WTC11 (cell line): ENCODE measurements at regions of chr22 and their contacts with region 1.

Region 1: GRCh38 chr22:36301384-36301828 is 48.5 kb downstream of the APOL1 start:
- DNase-seq: peak; percentile 89
- ATAC-seq: peak; percentile 98
- H3K4me3 Mint-ChIP-seq: no peak overlapping the region
- H3K27ac Mint-ChIP-seq: peak overlapping the region; percentile 72
- H3K4me1 Mint-ChIP-seq: no peaks in the 10 kb centered on the region
- H3K27me3 Mint-ChIP-seq: no peaks in the 10 kb centered on the region
- CTCF ChIP-seq: peak; percentile 97

Region 2: DNA sequence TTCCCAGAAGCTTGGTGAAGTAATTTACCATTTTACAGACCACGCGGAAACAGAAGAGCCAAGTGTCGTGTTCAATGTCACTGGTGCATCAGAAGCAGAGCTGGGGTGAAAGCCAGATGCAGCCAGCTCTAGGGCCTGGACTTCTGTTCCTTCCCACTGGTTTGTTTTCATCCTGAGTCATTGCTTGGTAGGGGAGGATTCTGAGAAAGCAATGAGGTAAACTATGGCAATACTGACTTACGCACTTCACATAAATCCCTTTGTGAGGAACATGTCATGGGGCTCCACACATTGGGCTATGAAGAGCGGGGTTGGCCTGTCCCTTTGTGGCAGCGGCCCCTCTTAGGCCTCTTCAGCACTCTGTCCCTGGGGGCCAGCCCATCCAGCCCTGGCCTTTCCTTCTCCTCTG is 220.4 kb before region 1 on chr22:
- CTCF ChIA-PET with region 1: no interaction called
- POLR2A ChIA-PET with region 1: no interaction called
- DNase-seq: no peak
- ATAC-seq: no peak
- H3K4me3 Mint-ChIP-seq: no peak overlapping the region
- H3K27ac Mint-ChIP-seq: no peak overlapping the region
- H3K4me1 Mint-ChIP-seq: peaks cover 10% of the 10 kb centered on the region
- H3K27me3 Mint-ChIP-seq: no peaks in the 10 kb centered on the region
- CTCF ChIP-seq: no peak

Region 3: GRCh38 chr22:36286471-36287224 is 14.8 kb before region 1 on chr22:
- CTCF ChIA-PET with region 1: interaction called, 27 read pairs
- POLR2A ChIA-PET with region 1: no interaction called
- DNase-seq: peak; percentile 87
- ATAC-seq: peak; percentile 94
- H3K4me3 Mint-ChIP-seq: no peak overlapping the region
- H3K27ac Mint-ChIP-seq: 0 out of 2 replicates have a peak overlapping the region, but pooled peaks have one; percentile 15
- H3K4me1 Mint-ChIP-seq: peaks cover 5% of the 10 kb centered on the region; the same call in 1 of the 2 replicates
- H3K27me3 Mint-ChIP-seq: no peaks in the 10 kb centered on the region
- CTCF ChIP-seq: peak; percentile 85

Region 4: GRCh38 chr22:36331306-36331911 is 30.0 kb after region 1 on chr22:
- CTCF ChIA-PET with region 1: interaction called, 16 read pairs
- POLR2A ChIA-PET with region 1: interaction called, 3 read pairs
- DNase-seq: peak; percentile 54
- ATAC-seq: peak; percentile 32
- H3K4me3 Mint-ChIP-seq: no peak overlapping the region
- H3K27ac Mint-ChIP-seq: peak overlapping the region; percentile 100
- H3K4me1 Mint-ChIP-seq: peaks cover 81% of the 10 kb centered on the region
- H3K27me3 Mint-ChIP-seq: no peaks in the 10 kb centered on the region
- CTCF ChIP-seq: no peak

Region 5: GRCh38 chr22:36461669-36462649 is 160.6 kb after region 1 on chr22:
- CTCF ChIA-PET with region 1: interaction called, 16 read pairs
- POLR2A ChIA-PET with region 1: no interaction called
- DNase-seq: no peak
- ATAC-seq: peak; percentile 55
- H3K4me3 Mint-ChIP-seq: no peak overlapping the region
- H3K27ac Mint-ChIP-seq: peak overlapping the region; percentile 85
- H3K4me1 Mint-ChIP-seq: peaks cover 37% of the 10 kb centered on the region
- H3K27me3 Mint-ChIP-seq: peaks cover 6% of the 10 kb centered on the region
- CTCF ChIP-seq: no peak

Region 6: DNA sequence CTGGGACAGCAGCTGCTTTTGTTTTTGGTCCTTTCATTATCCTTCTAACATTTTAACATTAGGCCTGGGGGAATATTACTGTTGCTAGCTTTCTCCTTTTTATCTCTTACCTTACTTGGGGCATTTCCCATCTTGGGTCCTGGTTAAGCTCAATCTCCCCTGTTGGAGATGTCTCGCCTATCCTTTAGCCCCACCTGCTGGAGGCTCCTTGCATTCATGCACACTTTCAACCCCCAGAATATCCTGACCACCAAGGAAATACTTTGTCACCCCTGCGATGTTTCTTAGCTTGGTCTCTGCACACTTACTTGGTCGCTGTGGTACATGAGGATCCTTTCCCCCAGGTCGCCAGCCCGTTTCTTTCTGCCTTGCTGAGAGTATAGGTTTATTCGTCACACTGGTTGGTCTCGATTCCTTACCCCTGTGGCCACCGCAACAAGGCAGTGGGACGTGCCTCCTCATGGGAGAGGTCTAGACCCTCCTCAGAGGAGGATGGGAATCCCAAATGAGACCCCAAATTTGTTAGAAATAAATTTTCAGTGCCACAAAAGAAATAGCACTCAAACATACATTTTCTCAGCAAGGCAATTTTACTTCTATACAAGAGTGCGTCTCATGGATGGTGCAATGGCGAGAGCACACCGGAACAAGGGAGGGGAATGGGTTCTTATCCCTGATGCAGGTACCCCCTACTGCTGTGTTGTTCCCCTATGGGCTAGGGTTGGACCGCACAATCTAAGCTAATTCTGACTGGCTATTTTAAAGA is 185.4 kb after region 1 on chr22:
- CTCF ChIA-PET with region 1: interaction called, 39 read pairs
- POLR2A ChIA-PET with region 1: no interaction called
- DNase-seq: peak; percentile 77
- ATAC-seq: peak; percentile 57
- H3K4me3 Mint-ChIP-seq: no peak overlapping the region; the same call in 1 of the 2 replicates
- H3K27ac Mint-ChIP-seq: no peak overlapping the region
- H3K4me1 Mint-ChIP-seq: no peaks in the 10 kb centered on the region
- H3K27me3 Mint-ChIP-seq: peaks cover 41% of the 10 kb centered on the region
- CTCF ChIP-seq: peak; percentile 42; the same call in 1 of the 2 replicates